Adrenal gland (tissue), 19 donors: ENCODE measurements at regions of chr1 and their contacts with region 1.

Region 1: DNA sequence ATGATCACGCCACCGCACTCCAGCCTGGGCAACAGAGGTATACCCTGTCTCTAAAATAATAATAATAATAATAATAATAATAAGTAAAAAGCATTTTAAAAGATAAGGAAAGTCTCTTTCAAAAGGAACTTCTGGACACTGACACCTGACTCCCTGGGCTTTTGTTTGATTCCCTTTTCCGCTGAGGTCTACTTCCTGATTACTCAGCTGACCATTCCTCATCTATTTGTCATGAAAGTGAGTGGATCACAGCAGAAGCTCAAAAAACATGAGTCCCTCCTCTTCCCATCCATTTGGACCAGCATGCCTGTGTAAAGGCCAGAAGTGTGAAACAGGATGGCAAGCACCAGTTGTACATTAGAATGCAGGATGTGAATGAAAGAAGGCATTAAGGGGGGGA is 61.1 kb upstream of the FBXO28 start:
- DNase-seq: no peak
- H3K4me3 ChIP-seq: no peak overlapping the region
- H3K27ac ChIP-seq: no peak overlapping the region
- H3K4me1 ChIP-seq: no peaks in the 10 kb centered on the region
- H3K27me3 ChIP-seq: peaks cover 4% of the 10 kb centered on the region
- CTCF ChIP-seq: no peak
- POLR2A ChIP-seq: no peak

Region 2: DNA sequence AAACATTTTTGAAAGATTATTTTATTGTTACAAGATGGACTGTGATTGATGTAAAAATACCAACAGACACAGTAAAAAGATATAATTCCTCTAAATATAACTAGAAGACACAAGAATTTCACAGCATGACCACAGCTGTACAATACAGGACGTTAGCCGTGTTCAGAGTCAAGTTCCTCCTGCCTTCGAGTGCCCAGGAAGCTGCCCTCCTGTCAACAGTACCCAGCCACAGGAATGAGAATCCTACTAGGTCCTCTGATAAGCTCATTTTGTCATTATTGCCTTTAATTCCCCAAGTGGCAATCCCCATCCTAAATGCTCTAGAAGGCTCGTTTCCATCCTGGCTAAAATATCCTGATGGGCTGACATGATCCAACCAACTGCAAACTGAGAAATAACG is 356.8 kb before region 1 on chr1:
- intact Hi-C with region 1: loop called in 1 of 2 experiments (anchors 5 kb)
- DNase-seq: no peak
- H3K4me3 ChIP-seq: no peak overlapping the region
- H3K27ac ChIP-seq: no peak overlapping the region
- H3K4me1 ChIP-seq: peaks cover 7 to 28% of the 10 kb centered on the region in 2 donors
- H3K27me3 ChIP-seq: no peaks in the 10 kb centered on the region
- CTCF ChIP-seq: no peak
- POLR2A ChIP-seq: no peak

Region 3: DNA sequence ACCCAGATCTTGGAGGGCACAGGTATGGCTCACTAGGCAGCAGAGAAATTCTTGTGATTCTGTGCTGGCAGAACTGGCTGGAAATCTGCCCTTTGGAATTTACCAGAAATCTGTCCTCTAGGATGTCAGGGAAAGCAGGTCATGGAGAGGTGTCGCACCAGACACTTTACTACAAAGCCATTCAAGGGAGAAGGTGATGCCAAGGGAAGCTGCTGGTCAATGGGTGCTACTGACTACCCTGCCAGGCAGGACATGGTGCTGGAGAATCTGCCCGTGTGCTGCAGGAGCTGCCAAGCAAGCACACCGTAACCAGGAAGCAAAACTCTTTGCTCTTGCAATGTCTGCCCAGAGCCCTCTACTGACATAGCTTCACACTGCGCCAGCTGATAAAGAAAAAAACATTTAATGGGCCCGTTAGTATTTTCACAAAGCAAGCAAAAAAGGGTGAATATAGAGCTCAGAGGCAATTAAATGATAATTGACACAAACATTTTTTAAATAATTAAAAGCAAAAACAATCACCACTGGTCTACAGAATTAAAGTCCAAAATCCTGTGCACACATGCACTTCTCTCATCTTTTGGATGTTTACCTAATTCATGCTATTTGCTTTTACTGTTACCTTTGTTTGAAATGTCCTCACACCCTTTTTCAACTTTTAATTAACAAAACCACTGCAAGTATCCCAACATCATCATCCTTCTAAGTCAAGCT is 54.0 kb after region 1 on chr1:
- intact Hi-C with region 1: no loop called
- DNase-seq: peak in 2 of 7 donors; percentile 9
- H3K4me3 ChIP-seq: no peak overlapping the region
- H3K27ac ChIP-seq: no peak overlapping the region
- H3K4me1 ChIP-seq: no peaks in the 10 kb centered on the region
- H3K27me3 ChIP-seq: no peaks in the 10 kb centered on the region
- CTCF ChIP-seq: peak in 2 of 6 experiments; percentile 7 to 11
- POLR2A ChIP-seq: no peak